Dendritic cell treated with granulocyte-macrophage colony-stimulating factor and Interleukin-4, amounts not matched to agents 40 ng/mL and 50 ng/mL, for 4 days (primary cell): ENCODE measurements at regions of chr4 and their contacts with region 1.

Region 1: DNA sequence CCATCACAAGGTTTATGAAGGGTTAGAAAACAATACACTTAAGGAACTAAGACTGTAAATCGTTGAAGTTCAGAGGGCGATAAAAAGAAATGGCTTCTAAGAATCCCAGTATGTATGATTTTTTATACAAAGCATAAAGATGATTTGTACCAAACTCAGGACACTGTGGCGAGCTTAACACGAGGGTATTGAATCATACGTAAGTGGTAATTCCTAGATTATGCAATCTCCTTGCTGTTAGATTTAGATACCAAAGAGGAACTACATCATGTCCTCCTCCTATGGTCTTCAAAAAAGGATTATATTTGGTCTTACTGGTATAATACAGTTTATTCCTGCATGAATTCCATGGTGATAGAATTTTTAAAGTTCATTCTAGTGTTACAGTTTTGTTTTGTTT is 23.9 kb downstream of the NFKB1 start:
- H3K4me3 Mint-ChIP-seq: no peak overlapping the region
- H3K27ac Mint-ChIP-seq: peak overlapping the region; percentile 69
- H3K4me1 Mint-ChIP-seq: peaks cover 42% of the 10 kb centered on the region
- H3K27me3 Mint-ChIP-seq: no peaks in the 10 kb centered on the region

Region 2: GRCh38 chr4:102157984-102158383 is 367.1 kb before region 1 on chr4:
- intact Hi-C with region 1: no loop called
- H3K4me3 Mint-ChIP-seq: no peak overlapping the region
- H3K27ac Mint-ChIP-seq: no peak overlapping the region
- H3K4me1 Mint-ChIP-seq: no peaks in the 10 kb centered on the region
- H3K27me3 Mint-ChIP-seq: no peaks in the 10 kb centered on the region

Region 3: GRCh38 chr4:102500696-102501446 is 24.2 kb before region 1 on chr4 and contains the start of gene NFKB1:
- intact Hi-C with region 1: loop called (anchors 1 kb)
- H3K4me3 Mint-ChIP-seq: peak within 1 kb of the TSS; percentile 94
- H3K27ac Mint-ChIP-seq: peak within 1 kb of the TSS; percentile 96
- H3K4me1 Mint-ChIP-seq: peaks cover 20% of the 10 kb centered on the region
- H3K27me3 Mint-ChIP-seq: peaks cover 2% of the 10 kb centered on the region